ENCODE measurements at regions of chr7 and their contacts with region 1.

Region 1: GRCh38 chr7:111730476-111731300 is 168.4 kb upstream of the IMMP2L start:
- DNase-seq: no peak
- ATAC-seq: peak; percentile 88
- H3K4me3 ChIP-seq: no peak overlapping the region
- H3K27ac ChIP-seq: no peak overlapping the region
- H3K4me1 ChIP-seq: no peaks in the 10 kb centered on the region
- H3K27me3 ChIP-seq: no peaks in the 10 kb centered on the region
- CTCF ChIP-seq: peak; percentile 55 to 60 (median 57)
- EP300 ChIP-seq: no peak
- POLR2A ChIP-seq: no peak
- RAD21 ChIP-seq: peak; percentile 82

Region 2: DNA sequence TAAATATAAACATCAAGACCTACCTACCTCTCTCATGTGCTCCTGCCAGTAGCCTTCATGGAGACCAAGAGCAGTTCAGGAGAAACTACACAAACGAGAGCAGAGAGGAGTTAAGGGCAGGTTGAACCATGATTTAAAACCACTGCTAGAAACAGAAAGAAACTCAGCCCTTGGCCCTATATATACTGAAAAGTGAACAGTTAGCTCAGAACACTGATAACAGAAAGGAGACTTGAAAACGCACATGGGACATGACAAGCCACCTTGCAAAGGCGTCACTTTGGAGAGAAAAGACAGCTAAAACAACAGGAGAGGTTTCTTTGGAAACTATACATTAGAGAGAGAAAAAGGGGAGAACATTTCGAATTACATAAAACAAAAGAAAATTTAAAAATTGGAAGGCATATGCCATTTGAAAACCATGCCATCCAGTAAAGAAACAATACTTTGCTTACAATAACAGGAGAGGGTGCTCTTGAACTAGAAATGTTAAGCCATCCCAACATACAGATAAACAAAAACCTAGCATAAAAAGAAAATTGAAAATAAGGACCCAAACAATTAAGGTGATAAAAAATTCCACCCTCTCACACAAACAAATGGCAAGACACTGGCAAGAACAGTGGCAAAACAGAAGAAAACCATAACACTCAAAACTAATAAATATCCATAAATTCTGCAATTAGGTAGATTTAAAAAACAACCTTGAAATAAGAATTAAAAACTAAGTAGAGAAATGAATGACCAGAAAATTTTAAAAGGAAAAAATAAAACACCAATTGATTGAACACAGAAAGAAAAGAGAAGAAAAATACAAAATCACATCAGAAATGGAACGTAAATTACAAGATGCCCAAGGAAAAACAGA is 401.1 kb before region 1 on chr7:
- CTCF ChIA-PET with region 1: interaction called, 3 read pairs
- POLR2A ChIA-PET with region 1: no interaction called
- RAD21 ChIA-PET with region 1: no interaction called
- SMC1A ChIA-PET with region 1: interaction called, 4 read pairs
- in situ Hi-C with region 1: loop called (anchors 10 kb)
- intact Hi-C with region 1: loop called (anchors 5 kb)
- DNase-seq: no peak
- ATAC-seq: peak; percentile 66
- H3K4me3 ChIP-seq: no peak overlapping the region
- H3K27ac ChIP-seq: no peak overlapping the region; the same call in 1 of the 2 replicates
- H3K4me1 ChIP-seq: 0 out of 2 replicates have a peak, but pooled peaks cover 3% of the 10 kb centered on the region
- H3K27me3 ChIP-seq: no peaks in the 10 kb centered on the region
- CTCF ChIP-seq: no peak
- EP300 ChIP-seq: no peak
- POLR2A ChIP-seq: no peak
- RAD21 ChIP-seq: peak; percentile 47